ENCODE measurements at regions of chr12 and their contacts with region 1.

Region 1: GRCh38 chr12:70559390-70559789 is 77.8 kb downstream of the PTPRB start:
- DNase-seq: no peak
- ATAC-seq: no peak
- H3K4me3 ChIP-seq: no peak overlapping the region
- H3K27ac ChIP-seq: no peak overlapping the region
- H3K4me1 ChIP-seq: no peaks in the 10 kb centered on the region
- H3K27me3 ChIP-seq: no peaks in the 10 kb centered on the region
- CTCF ChIP-seq: no peak
- POLR2A ChIP-seq: no peak
- RAD21 ChIP-seq: no peak

Region 2: DNA sequence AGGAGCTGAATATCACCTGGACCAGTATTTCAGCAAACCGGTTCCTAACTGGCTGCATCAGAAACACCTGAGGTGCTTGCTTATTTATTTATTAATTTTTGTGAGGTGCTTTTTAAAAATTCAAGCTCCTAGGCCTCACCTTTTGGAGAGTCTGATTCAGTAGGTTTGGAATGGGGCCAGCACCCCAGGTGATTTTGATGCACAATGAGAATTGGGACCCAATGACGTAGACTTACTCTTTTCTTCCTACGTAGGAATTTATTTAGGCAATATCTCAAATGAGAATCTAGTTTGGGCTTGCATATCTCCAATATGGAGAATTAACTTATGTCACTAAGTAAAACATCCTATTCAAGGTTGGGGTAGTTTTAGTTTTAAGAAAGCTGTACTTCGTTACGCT is 1192.6 kb before region 1 on chr12:
- CTCF ChIA-PET with region 1: interaction called, 11 read pairs
- POLR2A ChIA-PET with region 1: no interaction called
- dilution Hi-C with region 1: no loop called
- in situ Hi-C with region 1: no loop called
- intact Hi-C with region 1: no loop called
- DNase-seq: no peak
- ATAC-seq: no peak
- H3K4me3 ChIP-seq: no peak overlapping the region
- H3K27ac ChIP-seq: no peak overlapping the region
- H3K4me1 ChIP-seq: 0 out of 2 replicates have a peak, but pooled peaks cover 2% of the 10 kb centered on the region
- H3K27me3 ChIP-seq: no peaks in the 10 kb centered on the region
- CTCF ChIP-seq: no peak
- POLR2A ChIP-seq: no peak
- RAD21 ChIP-seq: no peak

Region 3: DNA sequence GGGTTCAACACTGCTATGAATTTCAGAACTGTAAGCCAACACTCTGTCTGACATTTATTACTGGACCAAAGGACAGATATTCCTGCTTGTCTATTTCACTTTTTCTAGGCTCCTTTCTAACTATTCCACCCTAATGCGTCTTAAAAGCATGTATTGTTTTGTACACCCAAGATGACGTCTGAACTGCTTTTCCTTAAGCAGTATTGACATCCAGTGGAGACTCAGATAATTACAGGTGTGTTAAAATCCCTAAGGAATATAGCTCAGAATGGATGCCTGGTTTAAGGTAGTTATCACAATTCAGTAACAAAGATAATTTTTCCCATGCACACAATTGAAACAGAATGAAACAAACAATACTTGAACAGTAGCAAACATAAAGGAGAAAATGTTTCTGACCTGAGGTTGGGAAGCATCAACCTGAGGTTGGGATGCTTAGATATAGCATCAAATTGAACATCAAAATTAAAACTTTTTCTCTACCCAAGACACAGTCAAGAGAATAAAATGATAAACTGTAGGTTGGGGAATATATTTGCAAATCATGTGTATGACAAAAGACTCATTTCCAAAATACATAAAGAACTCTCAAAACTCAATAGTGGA is 454.9 kb after region 1 on chr12:
- CTCF ChIA-PET with region 1: no interaction called
- POLR2A ChIA-PET with region 1: no interaction called
- dilution Hi-C with region 1: no loop called
- in situ Hi-C with region 1: no loop called
- intact Hi-C with region 1: no loop called
- DNase-seq: peak; percentile 21
- ATAC-seq: peak; percentile 51; the same call in 1 of the 2 replicates
- H3K4me3 ChIP-seq: no peak overlapping the region
- H3K27ac ChIP-seq: no peak overlapping the region
- H3K4me1 ChIP-seq: no peaks in the 10 kb centered on the region
- H3K27me3 ChIP-seq: no peaks in the 10 kb centered on the region
- CTCF ChIP-seq: peak; percentile 40; the same call in 1 of the 2 replicates
- POLR2A ChIP-seq: no peak
- RAD21 ChIP-seq: peak; percentile 42